GM12878 (cell line): ENCODE measurements at regions of chr1 and their contacts with region 1.

Region 1: GRCh38 chr1:108190707-108191411 is 9.3 kb downstream of the SLC25A24 start:
- DNase-seq: no peak
- ATAC-seq: peak; percentile 62
- H3K4me3 ChIP-seq: no peak overlapping the region
- H3K27ac ChIP-seq: no peak overlapping the region
- H3K4me1 ChIP-seq: no peaks in the 10 kb centered on the region
- H3K27me3 ChIP-seq: no peaks in the 10 kb centered on the region
- CTCF ChIP-seq: no peak
- EP300 ChIP-seq: no peak
- POLR2A ChIP-seq: no peak
- RAD21 ChIP-seq: no peak

Region 2: GRCh38 chr1:108089477-108089876 is 101.4 kb before region 1 on chr1:
- CTCF ChIA-PET with region 1: no interaction called
- POLR2A ChIA-PET with region 1: no interaction called
- RAD21 ChIA-PET with region 1: no interaction called
- SMC1A ChIA-PET with region 1: no interaction called
- in situ Hi-C with region 1: no loop called
- intact Hi-C with region 1: no loop called
- DNase-seq: no peak
- ATAC-seq: no peak
- H3K4me3 ChIP-seq: no peak overlapping the region
- H3K27ac ChIP-seq: no peak overlapping the region
- H3K4me1 ChIP-seq: no peaks in the 10 kb centered on the region; the same call in 1 of the 2 replicates
- H3K27me3 ChIP-seq: peaks cover 0 to 3% of the 10 kb centered on the region in 2 experiments; a peak in 1 of 4 replicates
- CTCF ChIP-seq: no peak
- EP300 ChIP-seq: no peak
- POLR2A ChIP-seq: no peak
- RAD21 ChIP-seq: no peak

Region 3: GRCh38 chr1:108141621-108142020 is 49.2 kb before region 1 on chr1:
- CTCF ChIA-PET with region 1: no interaction called
- POLR2A ChIA-PET with region 1: no interaction called
- RAD21 ChIA-PET with region 1: no interaction called
- SMC1A ChIA-PET with region 1: no interaction called
- in situ Hi-C with region 1: no loop called
- intact Hi-C with region 1: loop called (anchors 5 kb)
- DNase-seq: no peak
- ATAC-seq: no peak
- H3K4me3 ChIP-seq: no peak overlapping the region
- H3K27ac ChIP-seq: no peak overlapping the region
- H3K4me1 ChIP-seq: no peaks in the 10 kb centered on the region
- H3K27me3 ChIP-seq: no peaks in the 10 kb centered on the region
- CTCF ChIP-seq: no peak
- EP300 ChIP-seq: no peak
- POLR2A ChIP-seq: no peak
- RAD21 ChIP-seq: no peak

Region 4: GRCh38 chr1:108831225-108831624 is 640.4 kb after region 1 on chr1:
- CTCF ChIA-PET with region 1: no interaction called
- POLR2A ChIA-PET with region 1: no interaction called
- RAD21 ChIA-PET with region 1: no interaction called
- SMC1A ChIA-PET with region 1: no interaction called
- in situ Hi-C with region 1: no loop called
- intact Hi-C with region 1: no loop called
- DNase-seq: no peak
- ATAC-seq: no peak
- H3K4me3 ChIP-seq: no peak overlapping the region
- H3K27ac ChIP-seq: no peak overlapping the region
- H3K4me1 ChIP-seq: no peaks in the 10 kb centered on the region
- H3K27me3 ChIP-seq: no peaks in the 10 kb centered on the region
- CTCF ChIP-seq: no peak
- EP300 ChIP-seq: no peak
- POLR2A ChIP-seq: no peak
- RAD21 ChIP-seq: no peak